Right cardiac atrium (tissue), 5 donors: ENCODE measurements at regions of chr10 and their contacts with region 1.

Region 1: GRCh38 chr10:105691811-105692210 is 1050.7 kb downstream of the SORCS3 start:
- DNase-seq: no peak
- ATAC-seq: no peak
- H3K4me3 ChIP-seq: no peak overlapping the region
- H3K27ac ChIP-seq: no peak overlapping the region
- H3K4me1 ChIP-seq: no peaks in the 10 kb centered on the region
- H3K27me3 ChIP-seq: no peaks in the 10 kb centered on the region

Region 2: DNA sequence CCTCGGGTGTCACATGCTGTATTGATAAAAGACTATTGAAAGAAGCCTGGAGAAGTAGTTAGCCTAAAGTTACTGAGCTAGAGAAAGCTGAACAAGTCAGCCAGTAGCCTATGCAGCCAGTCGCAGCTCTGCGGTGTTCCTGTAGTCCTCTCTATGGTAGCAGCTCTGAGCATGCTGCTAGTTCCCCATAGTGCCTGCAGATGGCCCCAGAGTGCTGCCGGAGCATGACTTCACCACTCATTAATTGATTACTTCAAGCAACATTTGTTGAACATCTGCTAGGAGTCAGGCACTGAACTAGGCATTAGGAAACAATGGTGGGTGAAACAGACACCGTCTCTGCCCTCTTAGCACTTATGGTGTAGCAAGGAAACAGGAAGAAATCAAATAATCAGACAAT is 628.0 kb before region 1 on chr10:
- intact Hi-C with region 1: loop called in 1 of 4 experiments (anchors 5 kb)
- DNase-seq: peak; percentile 14 to 55 (median 46)
- ATAC-seq: peak in 1 of 2 donors; percentile 29
- H3K4me3 ChIP-seq: no peak overlapping the region
- H3K27ac ChIP-seq: no peak overlapping the region
- H3K4me1 ChIP-seq: no peaks in the 10 kb centered on the region
- H3K27me3 ChIP-seq: no peaks in the 10 kb centered on the region